CD14-positive monocyte (primary cell): ENCODE measurements at regions of chr1 and their contacts with region 1.

Region 1: GRCh38 chr1:32063261-32063681 is 9.5 kb upstream of the TMEM39B start:
- DNase-seq: peak; percentile 11 to 27 (median 19)
- H3K4me3 ChIP-seq: no peak overlapping the region
- H3K4me3 Mint-ChIP-seq: no peak overlapping the region
- H3K27ac ChIP-seq: no peak overlapping the region
- H3K27ac Mint-ChIP-seq: peak overlapping the region in 2 of 7 donors; percentile 66 to 70
- H3K4me1 ChIP-seq: peaks cover 25 to 32% of the 10 kb centered on the region in 2 donors
- H3K4me1 Mint-ChIP-seq: peaks cover 26% of the 10 kb centered on the region
- H3K27me3 ChIP-seq: no peaks in the 10 kb centered on the region
- H3K27me3 Mint-ChIP-seq: peaks cover 0 to 5% (median 0%) of the 10 kb centered on the region in 3 donors
- CTCF ChIP-seq: peak; percentile 70

Region 2: DNA sequence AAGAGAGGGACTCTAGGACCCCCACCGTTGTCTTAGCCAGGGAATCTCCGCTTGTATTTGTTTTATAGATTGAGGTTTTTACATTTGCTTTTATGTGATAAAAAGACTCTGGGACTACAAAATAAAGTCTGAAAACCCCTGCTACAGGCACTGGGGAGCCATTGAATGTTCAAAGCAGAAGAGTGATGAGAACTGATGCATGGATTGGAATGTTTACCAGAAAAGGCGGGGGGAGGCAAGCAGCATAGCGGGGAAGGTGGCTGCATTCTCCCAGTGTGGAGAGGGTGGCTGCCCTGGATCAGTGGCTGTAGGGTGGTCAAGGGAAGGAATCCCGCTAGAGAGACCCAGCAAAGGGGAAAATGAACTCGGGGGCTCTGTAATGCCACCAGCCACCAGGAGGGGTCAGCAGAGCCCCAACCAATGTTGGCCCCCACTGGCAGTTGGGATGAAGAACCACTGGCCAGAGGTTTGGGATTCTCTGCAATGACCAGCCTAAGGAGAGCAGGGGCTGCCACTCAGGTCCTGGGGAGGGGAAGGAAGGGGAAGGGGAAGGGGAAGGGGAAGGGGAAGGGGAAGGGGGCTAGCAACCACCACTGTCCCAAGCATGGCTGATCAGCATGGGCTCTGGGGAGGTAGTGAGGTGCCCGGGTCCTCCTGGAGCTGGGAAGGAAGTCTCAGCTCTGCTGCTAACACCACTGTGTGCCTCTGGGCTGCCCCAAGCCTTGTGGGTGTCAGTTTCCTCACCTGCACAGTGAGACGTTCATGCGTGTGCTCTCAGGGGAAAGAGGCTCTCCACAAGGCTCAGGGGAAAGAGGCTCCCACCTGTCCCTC is 399.4 kb before region 1 on chr1:
- intact Hi-C with region 1: loop called (anchors 5 to 10 kb)
- DNase-seq: peak; percentile 24 to 59 (median 51)
- H3K4me3 ChIP-seq: no peak overlapping the region
- H3K4me3 Mint-ChIP-seq: no peak overlapping the region
- H3K27ac ChIP-seq: no peak overlapping the region
- H3K27ac Mint-ChIP-seq: no peak overlapping the region
- H3K4me1 ChIP-seq: peaks cover 0 to 3% of the 10 kb centered on the region in 2 donors
- H3K4me1 Mint-ChIP-seq: peaks cover 2% of the 10 kb centered on the region
- H3K27me3 ChIP-seq: no peaks in the 10 kb centered on the region
- H3K27me3 Mint-ChIP-seq: peaks cover 2 to 7% (median 6%) of the 10 kb centered on the region in 3 donors
- CTCF ChIP-seq: peak; percentile 89

Region 3: GRCh38 chr1:31910933-31911332 is 152.3 kb before region 1 on chr1:
- intact Hi-C with region 1: no loop called
- DNase-seq: peak in 2 of 3 donors; percentile 42 to 54
- H3K4me3 ChIP-seq: no peak overlapping the region
- H3K4me3 Mint-ChIP-seq: peak overlapping the region in 1 of 2 donors; percentile 1
- H3K27ac ChIP-seq: peak overlapping the region in 1 of 2 donors; percentile 50
- H3K27ac Mint-ChIP-seq: peak overlapping the region in 6 of 7 donors; percentile 1 to 81 (median 52)
- H3K4me1 ChIP-seq: peaks cover 23 to 45% of the 10 kb centered on the region in 2 donors
- H3K4me1 Mint-ChIP-seq: peaks cover 45% of the 10 kb centered on the region
- H3K27me3 ChIP-seq: no peaks in the 10 kb centered on the region
- H3K27me3 Mint-ChIP-seq: no peaks in the 10 kb centered on the region
- CTCF ChIP-seq: no peak

Region 4: DNA sequence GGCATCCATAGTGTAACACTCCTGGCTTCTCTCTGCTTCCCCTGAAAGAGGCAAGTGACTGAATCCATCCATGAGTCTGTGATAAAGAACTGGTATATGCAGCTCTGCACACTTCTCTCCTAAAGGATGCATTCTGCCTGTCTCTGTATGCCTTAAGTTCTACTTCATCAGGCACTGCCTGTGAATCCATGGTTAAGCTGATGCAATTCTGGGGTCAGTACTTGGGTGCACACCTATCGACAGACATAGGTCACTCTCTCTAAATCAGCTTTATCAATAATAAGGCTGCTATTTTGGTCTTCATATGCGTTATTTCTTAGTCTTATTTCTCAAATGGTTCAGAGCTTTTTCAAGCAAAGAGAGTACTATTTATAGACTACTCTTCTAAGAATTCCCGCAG is 92.4 kb before region 1 on chr1:
- intact Hi-C with region 1: no loop called
- DNase-seq: no peak
- H3K4me3 ChIP-seq: no peak overlapping the region
- H3K4me3 Mint-ChIP-seq: no peak overlapping the region
- H3K27ac ChIP-seq: no peak overlapping the region
- H3K27ac Mint-ChIP-seq: no peak overlapping the region
- H3K4me1 ChIP-seq: no peaks in the 10 kb centered on the region
- H3K4me1 Mint-ChIP-seq: no peaks in the 10 kb centered on the region
- H3K27me3 ChIP-seq: no peaks in the 10 kb centered on the region
- H3K27me3 Mint-ChIP-seq: peaks cover 1 to 7% (median 1%) of the 10 kb centered on the region in 3 donors
- CTCF ChIP-seq: no peak

Region 5: GRCh38 chr1:32013386-32014198 is 49.7 kb before region 1 on chr1 and contains the start of gene KHDRBS1:
- intact Hi-C with region 1: loop called (anchors 10 kb)
- DNase-seq: peak; percentile 99
- H3K4me3 ChIP-seq: peak within 1 kb of the TSS; percentile 90 to 98 (median 91)
- H3K4me3 Mint-ChIP-seq: peak within 1 kb of the TSS; percentile 98
- H3K27ac ChIP-seq: peak within 1 kb of the TSS; percentile 84 to 91
- H3K27ac Mint-ChIP-seq: peak within 1 kb of the TSS; percentile 89 to 97 (median 95)
- H3K4me1 ChIP-seq: peaks cover 30 to 33% of the 10 kb centered on the region in 2 donors
- H3K4me1 Mint-ChIP-seq: peaks cover 34% of the 10 kb centered on the region
- H3K27me3 ChIP-seq: no peaks in the 10 kb centered on the region
- H3K27me3 Mint-ChIP-seq: peaks cover 0 to 2% (median 0%) of the 10 kb centered on the region in 3 donors
- CTCF ChIP-seq: no peak
- polyA plus RNA-seq, gene KHDRBS1: 40.7 to 65.6 (median 51.6) TPM

Region 6: GRCh38 chr1:32151319-32151787 is 88.1 kb after region 1 on chr1:
- intact Hi-C with region 1: no loop called
- DNase-seq: no peak
- H3K4me3 ChIP-seq: no peak overlapping the region
- H3K4me3 Mint-ChIP-seq: no peak overlapping the region
- H3K27ac ChIP-seq: no peak overlapping the region
- H3K27ac Mint-ChIP-seq: peak overlapping the region in 1 of 7 donors; percentile 48
- H3K4me1 ChIP-seq: no peaks in the 10 kb centered on the region
- H3K4me1 Mint-ChIP-seq: no peaks in the 10 kb centered on the region
- H3K27me3 ChIP-seq: no peaks in the 10 kb centered on the region
- H3K27me3 Mint-ChIP-seq: peaks cover 0 to 1% (median 0%) of the 10 kb centered on the region in 3 donors
- CTCF ChIP-seq: no peak